Heart right ventricle (tissue), 16 donors: ENCODE measurements at regions of chr7 and their contacts with region 1.

Region 1: GRCh38 chr7:108203537-108203936 is 73.4 kb upstream of the LAMB4 start:
- DNase-seq: no peak
- ATAC-seq: no peak
- H3K4me3 ChIP-seq: no peak overlapping the region
- H3K27ac ChIP-seq: no peak overlapping the region
- H3K4me1 ChIP-seq: no peaks in the 10 kb centered on the region
- H3K27me3 ChIP-seq: peaks cover 0 to 13% (median 0%) of the 10 kb centered on the region in 7 donors
- CTCF ChIP-seq: no peak

Region 2: DNA sequence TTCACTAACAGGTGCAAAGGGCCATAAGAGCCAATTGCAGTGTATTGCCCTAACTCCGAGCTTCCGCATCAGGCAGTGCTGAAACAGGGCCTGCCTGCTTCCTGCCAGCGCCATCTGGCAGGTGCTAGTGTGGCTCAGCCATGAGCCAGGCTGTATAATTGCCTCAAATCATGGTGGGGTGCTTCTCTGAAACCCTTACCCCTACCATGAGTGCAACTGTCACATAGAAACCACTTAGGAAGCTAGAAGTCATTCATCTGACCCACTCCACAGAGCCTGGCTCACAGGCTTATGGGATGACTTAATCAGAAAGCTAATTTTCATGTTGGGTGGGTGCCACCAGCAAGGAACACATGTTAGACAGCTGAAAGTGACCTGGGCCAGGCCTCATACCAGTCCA is 59.9 kb after region 1 on chr7:
- intact Hi-C with region 1: loop called in 1 of 10 experiments (anchors 10 kb)
- DNase-seq: peak in 1 of 2 donors; percentile 9
- ATAC-seq: peak in 1 of 8 donors; percentile 52
- H3K4me3 ChIP-seq: no peak overlapping the region
- H3K27ac ChIP-seq: no peak overlapping the region
- H3K4me1 ChIP-seq: no peaks in the 10 kb centered on the region
- H3K27me3 ChIP-seq: no peaks in the 10 kb centered on the region
- CTCF ChIP-seq: no peak

Region 3: GRCh38 chr7:108425714-108426275 is 222.3 kb after region 1 on chr7:
- intact Hi-C with region 1: no loop called
- DNase-seq: no peak
- ATAC-seq: no peak
- H3K4me3 ChIP-seq: no peak overlapping the region
- H3K27ac ChIP-seq: no peak overlapping the region
- H3K4me1 ChIP-seq: no peaks in the 10 kb centered on the region
- H3K27me3 ChIP-seq: peaks cover 0 to 34% (median 17%) of the 10 kb centered on the region in 7 donors
- CTCF ChIP-seq: no peak

Region 4: GRCh38 chr7:108613112-108613759 is 409.7 kb after region 1 on chr7:
- intact Hi-C with region 1: no loop called
- DNase-seq: no peak
- ATAC-seq: no peak
- H3K4me3 ChIP-seq: no peak overlapping the region
- H3K27ac ChIP-seq: no peak overlapping the region
- H3K4me1 ChIP-seq: peaks cover 0 to 7% (median 0%) of the 10 kb centered on the region in 9 donors
- H3K27me3 ChIP-seq: peaks cover 0 to 5% (median 0%) of the 10 kb centered on the region in 7 donors
- CTCF ChIP-seq: peak; percentile 59 to 86 (median 78)